ENCODE measurements at regions of chr2 and their contacts with region 1.

Region 1: GRCh38 chr2:181573140-181573736 is 83.7 kb downstream of the CERKL start:
- DNase-seq: peak; percentile 64

Region 2: DNA sequence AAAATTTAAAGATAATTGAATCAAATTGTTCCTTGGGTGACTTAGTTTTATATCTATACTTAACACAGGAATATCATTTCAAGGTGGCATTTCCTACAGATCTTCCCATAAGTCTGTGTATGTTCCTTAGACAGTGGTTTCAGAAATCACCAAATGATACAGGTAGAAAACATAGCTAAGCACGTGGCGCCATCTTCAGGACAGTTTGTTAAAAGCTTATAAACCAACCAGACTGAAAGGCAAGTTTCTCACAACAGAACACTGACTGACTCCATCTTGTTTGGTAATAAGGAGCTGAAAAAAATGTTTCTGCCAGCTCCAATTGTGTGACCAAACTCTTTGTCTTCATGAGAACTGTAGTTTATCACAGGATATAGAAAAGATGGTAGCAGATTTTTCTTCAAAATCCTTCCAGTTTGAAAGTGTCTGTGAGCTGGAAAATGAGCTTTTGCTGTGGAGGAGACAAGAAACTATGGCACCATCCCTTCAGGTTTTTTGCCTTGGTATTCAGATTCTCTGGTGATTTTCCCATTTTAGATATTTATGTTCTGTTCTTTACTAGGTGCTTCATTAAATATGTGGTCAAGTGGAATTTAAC is 141.9 kb after region 1 on chr2:
- in situ Hi-C with region 1: loop called (anchors 25 kb)
- DNase-seq: peak; percentile 84

Region 3: DNA sequence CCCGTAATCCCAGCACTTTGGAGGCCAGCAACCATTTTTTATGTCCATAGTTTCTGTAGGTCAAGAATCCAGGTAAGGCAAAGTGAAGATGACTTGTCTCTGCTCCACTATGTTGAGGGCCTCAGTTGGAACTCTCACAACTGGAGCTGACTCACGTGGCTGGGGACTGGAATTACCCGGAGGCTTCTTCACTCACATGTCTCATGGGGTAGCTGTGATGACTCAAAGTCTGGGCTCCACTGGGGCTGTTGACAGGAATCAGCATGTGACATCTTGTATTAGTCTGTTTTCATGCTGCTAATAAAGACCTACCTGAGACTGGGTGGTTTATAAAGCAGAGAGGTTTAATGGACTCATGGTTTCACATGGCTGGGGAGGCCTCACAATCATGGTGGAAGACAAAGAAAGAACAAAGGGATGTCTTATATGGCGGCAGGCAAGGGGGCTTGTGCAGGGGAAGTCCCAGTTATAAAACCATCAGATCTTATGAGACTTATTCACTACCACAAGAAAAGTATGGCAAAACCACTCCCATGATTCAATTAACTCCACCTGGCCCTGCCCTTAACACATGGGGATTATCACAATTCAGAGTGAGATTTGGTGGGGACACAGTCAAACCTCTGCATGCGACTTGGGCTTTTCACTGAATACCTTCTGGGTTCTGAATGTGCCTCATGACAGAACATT is 404.6 kb after region 1 on chr2:
- in situ Hi-C with region 1: no loop called
- DNase-seq: no peak

Measured in ACHN (cell line).